ENCODE measurements at regions of chr6 and their contacts with region 1.

Region 1: GRCh38 chr6:128005009-128005408 is 104.2 kb upstream of the THEMIS start:
- DNase-seq: no peak
- ATAC-seq: no peak
- H3K4me3 ChIP-seq: no peak overlapping the region
- H3K4me3 Mint-ChIP-seq: no peak overlapping the region
- H3K27ac ChIP-seq: no peak overlapping the region
- H3K27ac Mint-ChIP-seq: no peak overlapping the region
- H3K4me1 ChIP-seq: peaks cover 15% of the 10 kb centered on the region
- H3K4me1 Mint-ChIP-seq: peaks cover 38% of the 10 kb centered on the region
- H3K27me3 ChIP-seq: no peaks in the 10 kb centered on the region
- H3K27me3 Mint-ChIP-seq: no peaks in the 10 kb centered on the region
- CTCF ChIP-seq: no peak

Region 2: DNA sequence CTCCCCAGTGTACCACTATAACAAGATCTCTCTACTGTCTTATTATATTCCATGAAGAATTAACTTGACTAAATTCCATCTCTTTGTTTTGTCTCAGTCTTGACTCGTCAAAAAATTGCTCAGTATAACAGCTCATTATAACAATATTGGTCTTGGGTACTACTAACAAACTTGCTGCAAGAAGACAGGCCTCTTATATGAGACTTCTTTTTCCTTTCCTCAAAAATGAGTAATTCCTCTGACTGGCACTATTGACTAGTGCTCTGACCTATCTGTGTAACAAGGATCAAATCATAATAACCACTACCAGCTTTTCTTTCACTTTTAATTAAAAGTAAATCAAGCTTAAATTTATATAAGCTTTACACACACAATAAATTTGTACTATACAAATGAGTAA is 12.9 kb before region 1 on chr6:
- CTCF ChIA-PET with region 1: no interaction called
- POLR2A ChIA-PET with region 1: no interaction called
- intact Hi-C with region 1: loop called in 1 of 2 experiments (anchors 1 kb)
- DNase-seq: no peak
- ATAC-seq: peak; percentile 59
- H3K4me3 ChIP-seq: peak overlapping the region in 1 of 2 experiments; percentile 8
- H3K4me3 Mint-ChIP-seq: peak overlapping the region; percentile 73
- H3K27ac ChIP-seq: peak overlapping the region; percentile 5 to 38
- H3K27ac Mint-ChIP-seq: peak overlapping the region; percentile 88
- H3K4me1 ChIP-seq: peaks cover 37% of the 10 kb centered on the region
- H3K4me1 Mint-ChIP-seq: peaks cover 52% of the 10 kb centered on the region
- H3K27me3 ChIP-seq: no peaks in the 10 kb centered on the region
- H3K27me3 Mint-ChIP-seq: no peaks in the 10 kb centered on the region
- CTCF ChIP-seq: no peak

Region 3: DNA sequence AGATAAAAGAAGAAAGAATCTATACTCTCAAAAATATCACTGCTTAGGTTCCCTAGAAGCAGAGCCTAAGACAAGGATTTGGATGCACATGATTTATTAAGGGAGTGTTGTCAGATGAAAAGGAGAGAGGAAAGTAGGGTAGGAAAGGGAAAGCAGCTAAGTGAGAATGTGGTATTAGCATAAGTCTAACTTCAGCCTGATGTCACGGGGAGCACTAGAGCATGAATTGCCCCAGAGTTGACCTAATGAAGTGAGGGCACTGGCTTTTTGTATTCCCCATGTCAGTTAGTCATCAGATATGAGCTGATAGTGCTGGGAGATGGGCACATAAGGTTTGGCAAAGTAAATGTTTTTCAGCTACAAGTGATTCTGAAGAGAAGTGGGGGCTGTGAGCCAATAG is 24.8 kb after region 1 on chr6:
- CTCF ChIA-PET with region 1: no interaction called
- POLR2A ChIA-PET with region 1: interaction called, 3 read pairs
- intact Hi-C with region 1: loop called in 1 of 2 experiments (anchors 2 kb)
- DNase-seq: no peak
- ATAC-seq: no peak
- H3K4me3 ChIP-seq: no peak overlapping the region
- H3K4me3 Mint-ChIP-seq: no peak overlapping the region
- H3K27ac ChIP-seq: no peak overlapping the region
- H3K27ac Mint-ChIP-seq: no peak overlapping the region
- H3K4me1 ChIP-seq: peaks cover 43% of the 10 kb centered on the region
- H3K4me1 Mint-ChIP-seq: peaks cover 60% of the 10 kb centered on the region
- H3K27me3 ChIP-seq: no peaks in the 10 kb centered on the region
- H3K27me3 Mint-ChIP-seq: no peaks in the 10 kb centered on the region
- CTCF ChIP-seq: no peak

Measured in CD8-positive, alpha-beta T cell (primary cell).